ENCODE measurements at regions of chr1 and their contacts with region 1.

Region 1: GRCh38 chr1:197521118-197521739 is 253.2 kb downstream of the CRB1 start:
- DNase-seq: peak; percentile 67
- H3K4me3 Mint-ChIP-seq: no peak overlapping the region
- H3K27ac Mint-ChIP-seq: no peak overlapping the region
- H3K4me1 Mint-ChIP-seq: peaks cover 5% of the 10 kb centered on the region
- H3K27me3 Mint-ChIP-seq: no peaks in the 10 kb centered on the region
- CTCF ChIP-seq: peak; percentile 88

Region 2: GRCh38 chr1:197367627-197368026 is 153.6 kb before region 1 on chr1:
- CTCF ChIA-PET with region 1: no interaction called
- POLR2A ChIA-PET with region 1: no interaction called
- intact Hi-C with region 1: no loop called
- DNase-seq: no peak
- H3K4me3 Mint-ChIP-seq: no peak overlapping the region
- H3K27ac Mint-ChIP-seq: no peak overlapping the region
- H3K4me1 Mint-ChIP-seq: no peaks in the 10 kb centered on the region
- H3K27me3 Mint-ChIP-seq: no peaks in the 10 kb centered on the region
- CTCF ChIP-seq: no peak

Region 3: GRCh38 chr1:197399755-197400527 is 121.3 kb before region 1 on chr1:
- CTCF ChIA-PET with region 1: interaction called, 7 read pairs
- POLR2A ChIA-PET with region 1: no interaction called
- intact Hi-C with region 1: loop called (anchors 2 kb)
- DNase-seq: peak; percentile 82
- H3K4me3 Mint-ChIP-seq: no peak overlapping the region
- H3K27ac Mint-ChIP-seq: no peak overlapping the region
- H3K4me1 Mint-ChIP-seq: no peaks in the 10 kb centered on the region
- H3K27me3 Mint-ChIP-seq: peaks cover 13% of the 10 kb centered on the region
- CTCF ChIP-seq: peak; percentile 63

Region 4: GRCh38 chr1:197541411-197541810 is 20.2 kb after region 1 on chr1:
- CTCF ChIA-PET with region 1: interaction called, 18 read pairs
- POLR2A ChIA-PET with region 1: interaction called, 3 read pairs
- intact Hi-C with region 1: no loop called
- DNase-seq: no peak
- H3K4me3 Mint-ChIP-seq: no peak overlapping the region
- H3K27ac Mint-ChIP-seq: no peak overlapping the region
- H3K4me1 Mint-ChIP-seq: peaks cover 8% of the 10 kb centered on the region
- H3K27me3 Mint-ChIP-seq: no peaks in the 10 kb centered on the region
- CTCF ChIP-seq: no peak

Region 5: DNA sequence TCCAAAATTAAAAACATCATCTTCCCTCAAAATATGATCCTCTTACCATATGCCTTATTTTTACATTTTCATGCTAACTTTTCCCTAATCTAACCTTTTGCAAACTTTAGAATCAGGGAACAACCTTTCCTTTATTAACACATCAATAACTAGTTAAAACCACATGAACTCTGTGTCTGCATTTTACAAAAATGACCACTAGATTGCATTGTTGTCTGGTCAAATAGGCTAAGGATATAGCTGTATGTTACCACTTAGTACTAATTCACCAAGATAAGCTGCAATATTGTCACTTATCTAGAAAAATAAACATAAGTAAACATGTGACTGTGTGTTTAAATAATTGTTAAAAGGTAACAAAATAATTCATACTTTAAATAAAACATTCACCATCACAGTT is 171.7 kb after region 1 on chr1:
- CTCF ChIA-PET with region 1: interaction called, 6 read pairs
- POLR2A ChIA-PET with region 1: no interaction called
- intact Hi-C with region 1: loop called (anchors 10 kb)
- DNase-seq: peak; percentile 46
- H3K4me3 Mint-ChIP-seq: no peak overlapping the region
- H3K27ac Mint-ChIP-seq: no peak overlapping the region
- H3K4me1 Mint-ChIP-seq: peaks cover 19% of the 10 kb centered on the region
- H3K27me3 Mint-ChIP-seq: no peaks in the 10 kb centered on the region
- CTCF ChIP-seq: peak; percentile 61

Region 6: GRCh38 chr1:197924516-197925123 is 403.4 kb after region 1 on chr1:
- CTCF ChIA-PET with region 1: interaction called, 22 read pairs
- POLR2A ChIA-PET with region 1: no interaction called
- intact Hi-C with region 1: loop called (anchors 1 kb)
- DNase-seq: peak; percentile 84
- H3K4me3 Mint-ChIP-seq: no peak overlapping the region
- H3K27ac Mint-ChIP-seq: no peak overlapping the region
- H3K4me1 Mint-ChIP-seq: peaks cover 5% of the 10 kb centered on the region
- H3K27me3 Mint-ChIP-seq: no peaks in the 10 kb centered on the region
- CTCF ChIP-seq: peak; percentile 84

Region 7: GRCh38 chr1:198359024-198359653 is 837.9 kb after region 1 on chr1:
- CTCF ChIA-PET with region 1: no interaction called
- POLR2A ChIA-PET with region 1: no interaction called
- intact Hi-C with region 1: loop called (anchors 10 kb)
- DNase-seq: peak; percentile 62
- H3K4me3 Mint-ChIP-seq: no peak overlapping the region
- H3K27ac Mint-ChIP-seq: no peak overlapping the region
- H3K4me1 Mint-ChIP-seq: peaks cover 10% of the 10 kb centered on the region
- H3K27me3 Mint-ChIP-seq: no peaks in the 10 kb centered on the region
- CTCF ChIP-seq: peak; percentile 75